A673 (cell line): ENCODE measurements at regions of chr20 and their contacts with region 1.

Region 1: DNA sequence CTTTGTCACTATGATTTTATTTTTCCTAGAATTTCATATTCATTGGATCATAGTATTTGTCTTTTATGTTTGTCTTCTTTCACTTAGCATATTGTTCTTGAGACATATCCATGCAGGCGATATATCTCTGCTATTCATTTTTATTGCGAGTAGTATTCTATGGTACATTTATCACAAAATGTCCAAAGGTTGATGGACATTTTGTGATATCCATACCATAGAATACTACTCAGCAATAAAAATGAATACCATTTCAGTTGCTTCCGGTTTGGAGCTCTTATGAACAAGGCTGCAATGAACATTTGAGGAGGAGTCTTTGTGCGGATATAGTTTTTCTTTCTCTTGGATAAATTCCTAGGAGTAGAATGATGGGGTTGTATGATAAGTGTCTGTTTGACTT is 28.8 kb upstream of the EYA2 start:
- DNase-seq: no peak
- H3K4me3 ChIP-seq: no peak overlapping the region
- H3K27ac ChIP-seq: no peak overlapping the region
- H3K4me1 ChIP-seq: no peaks in the 10 kb centered on the region
- H3K27me3 ChIP-seq: peaks cover 46% of the 10 kb centered on the region
- CTCF ChIP-seq: no peak

Region 2: DNA sequence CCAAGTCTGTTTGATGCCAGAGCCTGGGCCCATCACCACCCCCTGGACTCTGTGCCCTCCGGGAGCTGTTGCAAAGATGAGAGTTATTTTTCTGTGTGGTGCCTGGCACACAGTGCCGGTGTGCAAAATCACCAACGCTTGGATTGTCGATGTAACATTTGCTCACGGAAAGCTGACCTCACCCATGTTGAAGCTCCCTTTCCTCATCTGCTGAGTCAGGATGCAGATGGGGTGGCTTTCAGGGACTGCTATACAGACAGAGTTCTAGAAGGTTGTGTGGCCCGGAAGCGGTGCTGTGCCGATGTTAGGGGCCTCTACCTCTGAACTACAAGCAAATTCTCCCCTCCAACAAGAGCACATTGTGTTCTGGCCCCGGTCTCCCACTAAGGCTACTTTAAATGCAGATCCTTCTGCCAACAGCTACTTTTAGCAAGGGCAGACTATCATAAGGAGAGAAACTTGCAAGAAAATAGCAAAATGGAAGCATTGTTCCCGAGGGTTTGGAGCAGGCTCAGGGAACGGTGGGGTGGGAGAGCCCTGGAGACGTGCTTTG is 62.8 kb after region 1 on chr20:
- CTCF ChIA-PET with region 1: no interaction called
- POLR2A ChIA-PET with region 1: no interaction called
- intact Hi-C with region 1: loop called (anchors 10 kb)
- DNase-seq: no peak
- H3K4me3 ChIP-seq: no peak overlapping the region
- H3K27ac ChIP-seq: no peak overlapping the region
- H3K4me1 ChIP-seq: no peaks in the 10 kb centered on the region
- H3K27me3 ChIP-seq: peaks cover 53% of the 10 kb centered on the region
- CTCF ChIP-seq: no peak